ENCODE measurements at regions of chr5 and their contacts with region 1.

Region 1: GRCh38 chr5:160008877-160009590 is at the start of gene TTC1:
- DNase-seq: peak; percentile 72
- ATAC-seq: peak; percentile 98
- H3K4me3 Mint-ChIP-seq: peak within 1 kb of the TSS; percentile 100
- H3K27ac Mint-ChIP-seq: peak within 1 kb of the TSS; percentile 98
- H3K4me1 Mint-ChIP-seq: peaks cover 31% of the 10 kb centered on the region
- H3K27me3 Mint-ChIP-seq: no peaks in the 10 kb centered on the region
- CTCF ChIP-seq: no peak
- total RNA-seq, gene TTC1: 59.9 and 65.0 TPM in 2 replicates

Region 2: DNA sequence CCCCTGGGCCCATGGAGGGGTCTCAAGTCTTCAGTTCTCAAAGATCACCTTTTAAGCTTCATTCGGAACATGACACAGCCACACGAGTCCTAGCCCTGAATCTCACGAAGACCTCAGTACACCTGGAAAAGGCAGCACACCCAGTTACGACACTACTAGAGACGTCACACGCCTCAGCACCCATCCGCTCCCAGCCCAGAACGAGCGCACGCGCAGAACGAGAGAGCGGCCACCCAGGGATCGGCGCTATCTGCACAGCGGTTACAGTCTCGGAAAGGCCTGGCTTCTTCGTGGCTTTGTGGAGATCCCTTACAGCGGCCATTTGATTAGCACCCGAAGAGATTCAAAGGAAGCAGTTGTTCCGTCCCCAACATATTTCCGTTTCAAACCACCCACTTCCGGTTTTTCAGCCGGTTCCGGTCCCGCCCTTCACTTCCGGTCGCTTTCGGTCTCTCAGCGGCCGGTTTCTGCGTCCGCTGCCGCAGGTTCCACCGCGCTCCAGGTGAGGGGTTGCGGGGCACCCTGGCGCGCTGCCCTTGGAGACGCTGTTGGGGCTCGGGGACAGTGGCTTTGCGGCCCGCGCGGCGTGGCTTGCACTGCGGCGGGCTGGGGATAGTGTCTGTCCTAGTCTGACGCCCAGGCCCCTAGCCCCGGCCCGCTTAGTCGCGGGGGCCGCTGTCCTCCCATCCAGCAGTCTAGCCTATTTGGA is 746.0 kb before region 1 on chr5 and contains the start of gene UBLCP1:
- CTCF ChIA-PET with region 1: no interaction called
- POLR2A ChIA-PET with region 1: no interaction called
- intact Hi-C with region 1: loop called (anchors 1 kb)
- DNase-seq: peak; percentile 78
- ATAC-seq: peak; percentile 83
- H3K4me3 Mint-ChIP-seq: peak within 1 kb of the TSS; percentile 99
- H3K27ac Mint-ChIP-seq: peak within 1 kb of the TSS; percentile 99
- H3K4me1 Mint-ChIP-seq: peaks cover 39% of the 10 kb centered on the region
- H3K27me3 Mint-ChIP-seq: no peaks in the 10 kb centered on the region
- CTCF ChIP-seq: no peak
- total RNA-seq, gene UBLCP1: 40.3 and 44.8 TPM in 2 replicates

Region 3: DNA sequence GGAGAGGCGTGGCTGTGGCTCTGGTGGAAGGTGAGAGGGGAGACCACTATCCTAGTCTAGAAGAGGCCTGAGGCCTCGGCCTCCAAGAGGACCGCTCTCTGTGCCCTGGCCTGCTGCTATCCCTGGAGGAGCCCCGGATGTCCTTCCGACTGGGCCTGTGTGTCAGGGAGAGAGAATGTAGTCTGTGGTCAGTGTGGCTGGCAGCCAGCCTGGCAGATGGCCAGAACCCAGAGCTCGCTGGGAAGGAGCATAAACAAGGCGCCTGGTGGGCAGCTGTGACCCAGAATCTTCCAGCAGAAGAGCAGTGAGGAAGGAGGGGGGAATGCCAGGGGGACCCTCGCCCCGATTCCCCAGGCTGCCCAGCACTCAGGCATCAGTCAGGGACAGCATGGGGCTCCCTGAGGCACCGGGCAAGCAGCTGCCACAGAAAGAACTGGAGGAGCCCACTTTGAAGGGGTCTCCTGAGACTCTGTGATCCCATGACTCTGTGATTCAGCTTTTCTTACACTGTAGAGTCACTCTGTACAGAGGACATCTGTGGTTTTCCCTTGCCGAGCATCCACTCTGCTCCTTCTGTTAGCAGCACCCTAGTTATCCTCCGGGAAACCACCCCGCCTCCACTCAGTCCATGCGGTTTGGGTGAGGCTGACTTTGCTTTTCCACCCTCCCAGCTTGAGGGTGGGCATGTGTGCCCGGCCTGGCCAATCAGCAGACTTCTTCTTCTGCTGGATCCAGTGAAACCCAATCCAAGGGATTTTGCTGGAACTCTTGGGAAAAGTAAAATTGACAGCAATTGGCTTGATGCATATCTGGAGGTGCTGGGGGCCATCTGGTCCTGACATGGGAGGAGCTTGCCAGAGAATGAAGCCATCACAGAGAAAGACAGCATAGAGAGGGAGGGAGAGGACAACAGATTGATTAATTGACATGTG is 156.4 kb after region 1 on chr5:
- CTCF ChIA-PET with region 1: no interaction called
- POLR2A ChIA-PET with region 1: no interaction called
- intact Hi-C with region 1: no loop called
- DNase-seq: no peak
- ATAC-seq: no peak
- H3K4me3 Mint-ChIP-seq: no peak overlapping the region
- H3K27ac Mint-ChIP-seq: no peak overlapping the region
- H3K4me1 Mint-ChIP-seq: no peaks in the 10 kb centered on the region
- H3K27me3 Mint-ChIP-seq: peaks cover 39% of the 10 kb centered on the region
- CTCF ChIP-seq: no peak